Mammary epithelial cell (primary cell): ENCODE measurements at regions of chr19 and their contacts with region 1.

Region 1: DNA sequence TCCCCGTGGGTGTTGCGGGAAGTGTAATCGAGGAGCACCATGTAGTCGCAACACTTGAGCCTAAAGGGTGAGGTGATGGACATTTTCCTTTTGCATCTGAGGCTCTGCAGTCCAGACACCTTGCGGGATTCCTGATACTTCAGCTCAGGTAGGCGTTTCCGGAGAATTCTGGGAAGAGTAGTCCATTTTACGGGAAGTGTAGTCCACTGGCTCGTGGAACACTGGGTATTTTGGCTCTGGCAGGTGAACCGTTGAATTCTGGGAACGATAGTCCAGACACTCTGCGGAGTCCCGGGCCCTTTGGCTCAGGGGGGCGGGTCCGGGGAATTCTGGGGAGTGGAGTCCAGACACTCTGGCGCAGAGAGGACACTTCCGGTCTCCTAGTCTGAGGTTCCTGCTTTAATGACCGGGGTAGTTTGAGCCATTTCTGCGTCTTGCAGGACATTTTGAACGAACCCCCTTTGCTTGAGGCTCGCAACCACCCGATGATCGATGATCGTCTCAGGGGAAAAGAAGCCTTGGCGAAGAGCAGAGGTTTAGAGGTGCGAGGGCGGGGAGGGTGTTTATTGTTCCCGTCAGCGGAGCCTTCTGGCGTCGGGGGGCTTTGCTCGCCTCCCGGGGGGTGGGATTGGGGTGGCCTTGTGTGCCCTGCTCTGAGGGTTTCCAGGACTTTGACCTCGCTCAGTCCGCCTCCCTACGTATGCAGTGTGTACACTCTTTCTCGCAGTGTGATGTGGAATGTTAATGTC is at the start of gene ZNF223:
- DNase-seq: peak; percentile 97
- H3K4me3 ChIP-seq: peak within 1 kb of the TSS; percentile 54 to 63 (median 56)
- H3K27ac ChIP-seq: peak within 1 kb of the TSS; percentile 41
- H3K4me1 ChIP-seq: peaks cover 9% of the 10 kb centered on the region
- H3K27me3 ChIP-seq: no peaks in the 10 kb centered on the region
- CTCF ChIP-seq: no peak
- total RNA-seq, gene ZNF223: 4.6 to 6.3 TPM

Region 2: DNA sequence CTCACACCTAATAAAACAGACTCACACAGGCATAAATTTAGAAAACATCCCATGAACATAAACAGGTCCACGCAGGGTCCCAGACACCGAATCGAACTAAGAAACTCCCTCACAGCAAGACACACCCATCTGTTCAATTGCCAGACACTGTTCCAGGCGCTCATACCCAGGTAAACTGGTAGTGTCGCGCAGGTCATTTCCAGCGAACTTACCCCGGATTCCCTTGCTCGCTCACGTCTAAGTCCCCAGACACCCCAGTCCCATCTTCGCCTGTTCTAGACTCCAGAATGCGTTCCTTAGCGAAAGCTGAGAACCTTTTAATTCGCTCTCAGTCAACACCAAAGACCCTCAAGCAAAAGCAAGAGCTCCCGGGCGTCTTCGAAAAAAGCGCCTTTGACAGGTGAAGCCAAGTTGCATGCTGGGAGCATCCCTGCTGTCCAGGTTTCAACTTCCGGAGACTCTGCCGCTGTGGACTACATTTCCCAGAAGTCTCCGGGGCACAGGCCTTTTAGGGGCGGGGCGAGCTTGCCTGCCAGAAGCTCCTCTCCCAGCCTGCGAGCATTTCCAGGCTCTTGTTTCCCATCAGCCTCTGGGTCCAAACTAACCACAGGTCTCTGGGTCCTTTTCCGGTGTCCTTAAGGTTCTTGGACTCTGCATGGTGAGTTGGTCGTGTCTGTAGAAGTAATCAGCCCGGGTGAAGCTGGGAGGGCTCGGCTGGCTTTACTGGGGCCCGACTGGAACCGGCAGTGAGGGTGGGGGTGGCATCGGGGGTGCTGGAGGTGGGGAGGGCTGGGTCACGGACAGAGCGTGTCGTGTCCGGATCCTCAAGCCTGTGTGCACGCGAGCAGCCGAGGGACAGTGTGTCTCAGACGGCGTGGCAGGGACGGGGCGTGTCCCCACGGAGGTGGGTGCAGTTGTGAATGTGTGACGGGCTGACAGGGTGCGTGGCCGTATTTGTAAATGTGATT is 224.8 kb before region 1 on chr19 and contains the start of gene ZNF283:
- CTCF ChIA-PET with region 1: no interaction called
- dilution Hi-C with region 1: no loop called
- in situ Hi-C with region 1: no loop called
- intact Hi-C with region 1: loop called (anchors 1 kb)
- DNase-seq: peak; percentile 91
- H3K4me3 ChIP-seq: peak within 1 kb of the TSS; percentile 56 to 72 (median 63)
- H3K27ac ChIP-seq: peak within 1 kb of the TSS; percentile 9
- H3K4me1 ChIP-seq: no peaks in the 10 kb centered on the region
- H3K27me3 ChIP-seq: no peaks in the 10 kb centered on the region
- CTCF ChIP-seq: no peak
- total RNA-seq, gene ZNF283: 10.8 to 13.2 TPM

Region 3: DNA sequence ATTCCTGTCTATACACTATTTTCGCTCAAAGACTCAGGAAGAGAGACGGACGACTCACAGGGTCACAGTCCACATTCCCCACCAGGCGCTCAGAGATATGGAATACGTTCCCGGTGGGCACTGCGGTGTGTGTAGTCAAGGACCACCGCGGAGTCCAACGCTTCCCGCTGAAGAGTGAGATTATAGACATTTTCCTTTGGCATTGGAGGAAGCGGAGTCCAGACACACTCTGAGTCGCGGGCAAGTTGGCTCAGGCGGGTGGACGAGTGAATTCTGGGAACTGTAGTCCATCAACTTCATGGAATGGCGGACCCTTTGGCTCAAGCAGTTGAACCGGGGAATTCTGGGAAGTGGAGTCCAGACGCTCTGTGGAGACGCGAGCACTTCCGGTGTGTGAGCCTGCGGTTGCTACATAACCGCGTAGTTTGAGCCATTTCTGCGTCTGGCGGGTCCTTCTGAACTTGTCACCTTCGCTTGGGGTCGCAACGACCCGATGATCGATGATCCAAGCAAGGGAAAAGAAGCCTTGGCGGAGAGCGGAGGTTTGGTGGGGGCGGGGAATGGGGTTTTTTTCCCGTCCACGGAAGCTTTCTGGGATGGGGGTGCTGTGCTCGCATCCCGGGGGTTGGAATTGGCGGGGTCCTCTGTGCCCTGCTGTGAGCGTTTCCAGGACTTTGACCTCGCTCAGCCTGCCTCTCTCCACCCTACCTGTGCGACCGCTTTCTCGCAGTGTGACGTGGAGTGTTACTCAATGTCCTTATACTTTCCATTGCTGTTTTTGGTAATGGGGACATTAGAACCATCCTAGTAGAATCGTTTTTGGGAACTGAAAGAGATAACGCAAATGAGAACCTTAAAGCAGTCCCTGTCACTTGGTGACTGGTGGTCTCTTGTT is 49.0 kb before region 1 on chr19 and contains the start of gene ZNF230:
- CTCF ChIA-PET with region 1: no interaction called
- dilution Hi-C with region 1: no loop called
- in situ Hi-C with region 1: no loop called
- intact Hi-C with region 1: loop called (anchors 1 kb)
- DNase-seq: peak; percentile 95
- H3K4me3 ChIP-seq: peak within 1 kb of the TSS; percentile 89 to 93 (median 91)
- H3K27ac ChIP-seq: peak within 1 kb of the TSS; percentile 45
- H3K4me1 ChIP-seq: peaks cover 11% of the 10 kb centered on the region
- H3K27me3 ChIP-seq: no peaks in the 10 kb centered on the region
- CTCF ChIP-seq: no peak
- total RNA-seq, gene ZNF230: 3.2 to 4.2 TPM

Region 4: DNA sequence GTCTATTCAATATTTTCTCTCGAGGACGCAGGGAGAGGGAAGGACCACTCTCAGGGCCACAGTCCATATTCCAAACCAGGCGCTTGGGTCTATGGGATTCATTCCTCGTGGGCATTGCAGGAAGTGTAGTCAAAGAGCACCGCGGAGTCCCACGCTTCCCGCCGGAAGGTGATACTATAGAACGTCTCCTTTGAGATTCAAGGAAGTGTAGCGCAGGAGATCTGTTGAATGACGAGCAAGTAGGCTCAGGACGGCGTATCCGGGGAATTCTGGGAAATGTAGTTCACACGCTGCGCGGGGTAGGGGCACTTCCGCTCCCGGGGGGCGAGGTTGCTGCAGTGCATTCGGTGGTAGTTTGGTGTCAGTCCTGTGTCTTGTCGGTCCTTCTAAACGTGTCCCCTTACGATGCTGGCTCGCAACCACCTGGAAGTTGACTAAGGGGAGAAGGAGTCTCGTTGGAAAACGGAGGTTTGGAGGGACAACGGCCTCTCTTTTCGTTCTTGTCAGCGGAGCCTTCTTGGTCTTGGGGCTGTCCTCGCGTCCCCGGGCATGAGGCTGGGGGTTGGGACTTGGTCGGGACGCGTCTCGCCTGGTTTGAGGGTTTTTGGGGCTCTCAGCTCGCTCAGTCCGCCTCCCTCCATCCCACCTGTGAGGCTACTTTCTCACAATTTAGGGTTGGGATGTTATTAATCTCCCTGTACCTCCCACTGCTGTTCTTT is 20.2 kb after region 1 on chr19 and contains the start of gene ZNF284:
- CTCF ChIA-PET with region 1: no interaction called
- dilution Hi-C with region 1: no loop called
- in situ Hi-C with region 1: no loop called
- intact Hi-C with region 1: loop called (anchors 1 kb)
- DNase-seq: peak; percentile 87
- H3K4me3 ChIP-seq: peak within 1 kb of the TSS; percentile 62 to 84 (median 75)
- H3K27ac ChIP-seq: peak within 1 kb of the TSS; percentile 2
- H3K4me1 ChIP-seq: peaks cover 9% of the 10 kb centered on the region
- H3K27me3 ChIP-seq: no peaks in the 10 kb centered on the region
- CTCF ChIP-seq: no peak
- total RNA-seq, gene ZNF284: 2.6 to 4.7 TPM

Region 5: GRCh38 chr19:44212250-44212865 is 160.5 kb after region 1 on chr19 and contains the start of gene ZNF227:
- CTCF ChIA-PET with region 1: no interaction called
- dilution Hi-C with region 1: no loop called
- in situ Hi-C with region 1: no loop called
- intact Hi-C with region 1: loop called (anchors 5 kb)
- DNase-seq: peak; percentile 96
- H3K4me3 ChIP-seq: peak within 1 kb of the TSS; percentile 72 to 95 (median 95)
- H3K27ac ChIP-seq: peak within 1 kb of the TSS; percentile 57
- H3K4me1 ChIP-seq: no peaks in the 10 kb centered on the region
- H3K27me3 ChIP-seq: no peaks in the 10 kb centered on the region
- CTCF ChIP-seq: no peak
- total RNA-seq, gene ZNF227: 11.1 to 12.8 TPM